ENCODE measurements at regions of chr15 and their contacts with region 1.

Region 1: GRCh38 chr15:49155110-49155833 is at the start of gene COPS2:
- DNase-seq: peak; percentile 84 to 97 (median 89)
- ATAC-seq: peak; percentile 94
- H3K4me3 ChIP-seq: peak within 1 kb of the TSS; percentile 89
- H3K4me3 Mint-ChIP-seq: peak within 1 kb of the TSS; percentile 98
- H3K27ac ChIP-seq: peak within 1 kb of the TSS; percentile 82 to 89
- H3K27ac Mint-ChIP-seq: peak within 1 kb of the TSS; percentile 95
- H3K4me1 ChIP-seq: peaks cover 14% of the 10 kb centered on the region
- H3K4me1 Mint-ChIP-seq: peaks cover 68% of the 10 kb centered on the region
- H3K27me3 ChIP-seq: no peaks in the 10 kb centered on the region
- H3K27me3 Mint-ChIP-seq: no peaks in the 10 kb centered on the region
- CTCF ChIP-seq: no peak
- total RNA-seq, gene COPS2: 131 to 136 TPM

Region 2: GRCh38 chr15:48330855-48331795 is 824.1 kb before region 1 on chr15 and contains the start of gene DUT:
- CTCF ChIA-PET with region 1: no interaction called
- POLR2A ChIA-PET with region 1: no interaction called
- intact Hi-C with region 1: loop called in 1 of 2 experiments (anchors 5 kb)
- DNase-seq: peak; percentile 63 to 91 (median 78)
- ATAC-seq: peak; percentile 80
- H3K4me3 ChIP-seq: peak within 1 kb of the TSS; percentile 81
- H3K4me3 Mint-ChIP-seq: peak within 1 kb of the TSS; percentile 100
- H3K27ac ChIP-seq: peak within 1 kb of the TSS; percentile 88 to 90
- H3K27ac Mint-ChIP-seq: peak within 1 kb of the TSS; percentile 99
- H3K4me1 ChIP-seq: peaks cover 14% of the 10 kb centered on the region
- H3K4me1 Mint-ChIP-seq: peaks cover 28% of the 10 kb centered on the region
- H3K27me3 ChIP-seq: no peaks in the 10 kb centered on the region
- H3K27me3 Mint-ChIP-seq: no peaks in the 10 kb centered on the region
- CTCF ChIP-seq: no peak
- total RNA-seq, gene DUT: 60.7 to 65.3 TPM

Region 3: DNA sequence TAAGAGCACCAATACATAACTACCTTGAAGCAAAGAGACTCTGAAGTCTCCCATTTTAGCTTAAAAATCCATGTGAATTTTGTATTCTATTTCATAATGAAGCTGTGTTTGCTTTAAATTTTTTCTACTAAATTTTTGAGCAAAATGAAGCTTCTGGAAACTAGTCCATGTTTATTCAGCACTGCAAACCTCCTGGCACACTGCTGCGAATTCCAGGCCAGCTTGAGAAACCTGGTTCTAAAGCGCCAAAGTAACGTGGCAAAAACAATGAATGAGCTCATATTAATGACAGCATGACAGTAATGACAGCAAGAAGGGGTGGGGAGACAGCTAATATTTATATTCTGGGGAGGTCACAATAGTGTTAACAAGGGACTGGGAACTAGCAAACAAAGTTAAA is 370.1 kb before region 1 on chr15:
- CTCF ChIA-PET with region 1: no interaction called
- POLR2A ChIA-PET with region 1: no interaction called
- intact Hi-C with region 1: no loop called
- DNase-seq: no peak
- ATAC-seq: no peak
- H3K4me3 ChIP-seq: no peak overlapping the region
- H3K4me3 Mint-ChIP-seq: no peak overlapping the region
- H3K27ac ChIP-seq: no peak overlapping the region
- H3K27ac Mint-ChIP-seq: no peak overlapping the region
- H3K4me1 ChIP-seq: no peaks in the 10 kb centered on the region
- H3K4me1 Mint-ChIP-seq: no peaks in the 10 kb centered on the region
- H3K27me3 ChIP-seq: no peaks in the 10 kb centered on the region
- H3K27me3 Mint-ChIP-seq: no peaks in the 10 kb centered on the region
- CTCF ChIP-seq: no peak

Region 4: DNA sequence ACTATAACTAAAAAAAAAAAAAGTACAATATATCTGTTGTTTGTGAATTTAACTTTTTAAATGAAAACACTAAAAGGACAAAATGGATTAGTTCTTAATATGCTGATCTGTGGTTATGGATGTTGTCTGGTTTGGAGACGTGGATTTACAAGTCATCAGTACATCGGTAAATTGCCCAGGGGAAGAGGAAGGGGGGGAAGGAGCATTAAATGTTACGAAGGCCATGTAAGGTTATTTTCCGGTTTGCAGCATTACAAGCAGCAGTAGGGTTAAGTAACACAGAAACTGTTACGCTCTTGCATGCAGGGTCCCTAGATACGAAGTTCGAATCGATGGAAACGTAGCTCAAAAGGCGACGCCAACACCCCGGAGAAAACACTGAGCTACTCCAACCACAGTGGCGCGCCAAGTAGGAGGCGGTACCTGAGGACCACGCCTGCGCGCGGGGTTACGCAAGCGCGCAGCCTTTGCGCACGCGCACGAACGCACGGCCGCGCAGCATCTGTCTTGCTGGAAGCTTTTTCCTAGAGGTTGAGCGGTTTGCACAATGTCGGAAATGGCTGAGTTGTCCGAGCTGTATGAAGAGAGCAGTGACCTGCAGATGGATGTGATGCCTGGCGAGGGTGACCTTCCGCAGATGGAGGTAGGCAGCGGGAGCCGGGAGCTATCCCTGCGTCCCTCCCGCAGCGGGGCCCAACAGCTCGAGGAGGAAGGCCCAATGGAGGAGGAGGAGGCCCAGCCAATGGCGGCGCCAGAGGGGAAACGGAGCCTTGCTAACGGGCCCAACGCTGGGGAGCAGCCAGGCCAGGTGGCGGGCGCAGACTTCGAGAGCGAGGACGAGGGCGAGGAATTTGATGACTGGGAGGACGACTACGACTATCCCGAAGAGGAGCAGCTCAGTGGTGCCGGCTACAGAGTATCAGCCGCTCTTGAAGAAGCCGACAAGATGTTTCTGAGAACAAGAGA is 277.4 kb before region 1 on chr15 and contains the start of gene EID1:
- CTCF ChIA-PET with region 1: no interaction called
- POLR2A ChIA-PET with region 1: interaction called, 46 read pairs
- intact Hi-C with region 1: loop called in 1 of 2 experiments (anchors 1 kb)
- DNase-seq: peak; percentile 84 to 98 (median 90)
- ATAC-seq: peak; percentile 93
- H3K4me3 ChIP-seq: peak within 1 kb of the TSS; percentile 92
- H3K4me3 Mint-ChIP-seq: peak within 1 kb of the TSS; percentile 94
- H3K27ac ChIP-seq: peak within 1 kb of the TSS; percentile 68 to 78
- H3K27ac Mint-ChIP-seq: peak within 1 kb of the TSS; percentile 95
- H3K4me1 ChIP-seq: peaks cover 7% of the 10 kb centered on the region
- H3K4me1 Mint-ChIP-seq: peaks cover 23% of the 10 kb centered on the region
- H3K27me3 ChIP-seq: no peaks in the 10 kb centered on the region
- H3K27me3 Mint-ChIP-seq: peaks cover 25% of the 10 kb centered on the region
- CTCF ChIP-seq: no peak
- total RNA-seq, gene EID1: 41.0 to 45.3 TPM

Region 5: GRCh38 chr15:48984811-48985352 is 170.4 kb before region 1 on chr15:
- CTCF ChIA-PET with region 1: no interaction called
- POLR2A ChIA-PET with region 1: no interaction called
- intact Hi-C with region 1: no loop called
- DNase-seq: no peak
- ATAC-seq: no peak
- H3K4me3 ChIP-seq: no peak overlapping the region
- H3K4me3 Mint-ChIP-seq: no peak overlapping the region
- H3K27ac ChIP-seq: no peak overlapping the region
- H3K27ac Mint-ChIP-seq: no peak overlapping the region
- H3K4me1 ChIP-seq: no peaks in the 10 kb centered on the region
- H3K4me1 Mint-ChIP-seq: no peaks in the 10 kb centered on the region
- H3K27me3 ChIP-seq: no peaks in the 10 kb centered on the region
- H3K27me3 Mint-ChIP-seq: peaks cover 13% of the 10 kb centered on the region
- CTCF ChIP-seq: no peak

Region 6: GRCh38 chr15:49169880-49170597 is 14.8 kb after region 1 on chr15 and contains the start of gene GALK2:
- CTCF ChIA-PET with region 1: interaction called, 6 read pairs
- POLR2A ChIA-PET with region 1: interaction called, 71 read pairs
- intact Hi-C with region 1: loop called (anchors 1 to 2 kb)
- DNase-seq: peak; percentile 48 to 94 (median 73)
- ATAC-seq: peak; percentile 98
- H3K4me3 ChIP-seq: peak within 1 kb of the TSS; percentile 76
- H3K4me3 Mint-ChIP-seq: peak within 1 kb of the TSS; percentile 92
- H3K27ac ChIP-seq: peak within 1 kb of the TSS; percentile 77 to 88
- H3K27ac Mint-ChIP-seq: peak within 1 kb of the TSS; percentile 93
- H3K4me1 ChIP-seq: peaks cover 18% of the 10 kb centered on the region
- H3K4me1 Mint-ChIP-seq: peaks cover 52% of the 10 kb centered on the region
- H3K27me3 ChIP-seq: no peaks in the 10 kb centered on the region
- H3K27me3 Mint-ChIP-seq: no peaks in the 10 kb centered on the region
- CTCF ChIP-seq: no peak
- total RNA-seq, gene GALK2: 11.5 to 11.9 TPM

Region 7: GRCh38 chr15:49185473-49185872 is 30.2 kb after region 1 on chr15:
- CTCF ChIA-PET with region 1: no interaction called
- POLR2A ChIA-PET with region 1: no interaction called
- intact Hi-C with region 1: no loop called
- DNase-seq: no peak
- ATAC-seq: no peak
- H3K4me3 ChIP-seq: no peak overlapping the region
- H3K4me3 Mint-ChIP-seq: no peak overlapping the region
- H3K27ac ChIP-seq: no peak overlapping the region
- H3K27ac Mint-ChIP-seq: no peak overlapping the region
- H3K4me1 ChIP-seq: peaks cover 7% of the 10 kb centered on the region
- H3K4me1 Mint-ChIP-seq: peaks cover 27% of the 10 kb centered on the region
- H3K27me3 ChIP-seq: no peaks in the 10 kb centered on the region
- H3K27me3 Mint-ChIP-seq: no peaks in the 10 kb centered on the region
- CTCF ChIP-seq: no peak

Region 8: GRCh38 chr15:50424066-50424890 is 1269.0 kb after region 1 on chr15 and contains the start of gene USP8:
- CTCF ChIA-PET with region 1: no interaction called
- POLR2A ChIA-PET with region 1: interaction called, 3 read pairs
- intact Hi-C with region 1: loop called in 1 of 2 experiments (anchors 5 kb)
- DNase-seq: peak; percentile 84 to 96 (median 89)
- ATAC-seq: peak; percentile 97
- H3K4me3 ChIP-seq: peak within 1 kb of the TSS; percentile 87
- H3K4me3 Mint-ChIP-seq: peak within 1 kb of the TSS; percentile 97
- H3K27ac ChIP-seq: peak within 1 kb of the TSS; percentile 86 to 96
- H3K27ac Mint-ChIP-seq: peak within 1 kb of the TSS; percentile 93
- H3K4me1 ChIP-seq: peaks cover 34% of the 10 kb centered on the region
- H3K4me1 Mint-ChIP-seq: peaks cover 45% of the 10 kb centered on the region
- H3K27me3 ChIP-seq: no peaks in the 10 kb centered on the region
- H3K27me3 Mint-ChIP-seq: no peaks in the 10 kb centered on the region
- CTCF ChIP-seq: no peak
- total RNA-seq, gene USP8: 48.9 to 50.0 TPM

Region 9: GRCh38 chr15:50908210-50909009 is 1753.1 kb after region 1 on chr15 and contains the start of gene AP4E1:
- CTCF ChIA-PET with region 1: no interaction called
- POLR2A ChIA-PET with region 1: interaction called, 4 read pairs
- intact Hi-C with region 1: loop called in 1 of 2 experiments (anchors 2 kb)
- DNase-seq: peak; percentile 89 to 97 (median 93)
- ATAC-seq: peak; percentile 40
- H3K4me3 ChIP-seq: peak within 1 kb of the TSS; percentile 80
- H3K4me3 Mint-ChIP-seq: peak within 1 kb of the TSS; percentile 94
- H3K27ac ChIP-seq: peak within 1 kb of the TSS; percentile 91 to 100
- H3K27ac Mint-ChIP-seq: peak within 1 kb of the TSS; percentile 98
- H3K4me1 ChIP-seq: peaks cover 19% of the 10 kb centered on the region
- H3K4me1 Mint-ChIP-seq: peaks cover 29% of the 10 kb centered on the region
- H3K27me3 ChIP-seq: no peaks in the 10 kb centered on the region
- H3K27me3 Mint-ChIP-seq: no peaks in the 10 kb centered on the region
- CTCF ChIP-seq: peak; percentile 87
- total RNA-seq, gene AP4E1: 6.3 to 6.6 TPM